Dendritic cell treated with granulocyte-macrophage colony-stimulating factor and Interleukin-4, amounts not matched to agents 40 ng/mL and 50 ng/mL, for 4 days (primary cell): ENCODE measurements at regions of chr11 and their contacts with region 1.

Region 1: DNA sequence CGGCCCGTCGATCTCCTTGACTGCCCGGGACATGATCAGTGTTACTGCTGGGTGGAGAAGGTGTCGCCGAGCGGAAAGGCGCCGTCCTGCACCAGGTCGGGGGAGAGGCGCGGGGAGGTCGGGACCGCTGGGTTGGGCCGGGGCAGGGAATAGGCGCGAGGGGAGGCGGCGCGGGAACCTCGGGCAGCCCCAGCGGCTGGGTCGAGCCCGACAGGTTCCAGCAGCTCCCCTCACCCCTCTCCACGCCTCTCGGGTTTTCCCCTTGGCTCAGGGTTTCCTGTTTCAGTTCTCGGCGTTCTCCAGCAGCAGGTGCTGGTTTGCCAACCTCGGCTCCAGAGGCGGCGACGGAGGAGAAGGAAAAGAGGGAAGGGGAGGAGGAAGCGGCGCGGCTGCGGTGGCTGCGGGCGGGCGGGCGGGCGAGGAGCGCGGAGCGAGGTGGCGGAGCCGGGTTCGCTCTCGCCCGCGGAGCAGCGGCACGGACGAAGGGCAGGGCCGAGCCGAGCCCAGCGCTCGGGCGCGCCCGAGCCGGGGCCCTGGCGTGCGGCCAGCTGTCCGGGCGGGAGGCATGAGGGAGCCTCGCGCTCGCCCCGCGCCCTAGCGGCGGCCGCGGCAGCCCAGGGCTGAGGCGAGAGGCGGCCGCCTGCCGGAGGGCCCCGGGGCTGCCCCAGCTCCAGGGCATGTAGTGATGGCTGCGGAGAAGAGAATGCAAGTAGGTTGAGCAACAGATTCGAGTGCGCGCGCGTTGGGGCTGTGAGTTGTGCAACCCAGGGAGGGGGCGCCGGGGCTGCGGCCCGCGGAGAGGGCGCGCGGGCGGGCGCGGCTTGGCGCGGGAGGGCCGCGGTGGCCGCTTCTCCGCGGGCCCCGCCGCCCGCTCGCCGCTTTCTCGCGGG is at the start of gene ZC3H12C:
- H3K4me3 Mint-ChIP-seq: peak within 1 kb of the TSS; percentile 91
- H3K27ac Mint-ChIP-seq: peak within 1 kb of the TSS; percentile 89
- H3K4me1 Mint-ChIP-seq: peaks cover 19% of the 10 kb centered on the region
- H3K27me3 Mint-ChIP-seq: peaks cover 22% of the 10 kb centered on the region

Region 2: DNA sequence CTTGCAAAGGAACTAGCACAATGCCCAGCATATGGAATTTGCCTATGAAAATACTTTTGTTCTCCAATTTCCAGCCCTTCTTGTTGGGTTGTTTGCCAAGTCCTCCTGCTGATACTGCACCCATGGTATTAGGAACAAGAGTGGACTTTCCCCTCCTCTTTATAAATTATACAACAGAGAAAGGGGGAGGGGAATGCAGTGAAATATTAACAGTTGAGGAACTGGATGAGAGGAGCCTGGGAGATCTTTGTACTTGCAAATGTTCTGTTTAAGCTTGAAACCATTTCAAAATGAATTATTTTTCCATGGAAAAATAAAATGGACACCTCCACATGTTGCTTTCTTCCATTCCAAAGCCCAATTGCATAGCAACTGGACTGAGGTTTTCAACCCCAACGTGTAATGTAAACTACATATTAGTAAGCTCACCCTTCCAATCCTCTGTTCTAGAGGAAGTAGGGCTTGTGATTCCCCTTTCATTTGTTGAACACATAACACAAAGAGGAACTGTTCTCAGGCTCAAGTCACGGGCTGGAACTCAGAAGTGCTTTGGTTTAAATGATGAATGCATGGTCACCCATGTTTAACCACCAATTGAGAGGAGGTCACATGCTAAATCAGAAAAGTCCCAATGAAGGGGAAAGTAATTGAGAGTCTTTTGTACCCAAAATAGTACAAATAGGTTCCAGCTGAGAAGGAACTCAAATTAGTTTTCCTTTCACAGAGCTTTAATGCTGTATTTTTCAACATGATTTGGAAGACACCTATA is 65.7 kb before region 1 on chr11:
- intact Hi-C with region 1: loop called (anchors 1 kb)
- H3K4me3 Mint-ChIP-seq: no peak overlapping the region
- H3K27ac Mint-ChIP-seq: peak overlapping the region; percentile 64
- H3K4me1 Mint-ChIP-seq: peaks cover 17% of the 10 kb centered on the region
- H3K27me3 Mint-ChIP-seq: peaks cover 3% of the 10 kb centered on the region